Ovary (tissue), 10 donors: ENCODE measurements at regions of chr13 and their contacts with region 1.

Region 1: DNA sequence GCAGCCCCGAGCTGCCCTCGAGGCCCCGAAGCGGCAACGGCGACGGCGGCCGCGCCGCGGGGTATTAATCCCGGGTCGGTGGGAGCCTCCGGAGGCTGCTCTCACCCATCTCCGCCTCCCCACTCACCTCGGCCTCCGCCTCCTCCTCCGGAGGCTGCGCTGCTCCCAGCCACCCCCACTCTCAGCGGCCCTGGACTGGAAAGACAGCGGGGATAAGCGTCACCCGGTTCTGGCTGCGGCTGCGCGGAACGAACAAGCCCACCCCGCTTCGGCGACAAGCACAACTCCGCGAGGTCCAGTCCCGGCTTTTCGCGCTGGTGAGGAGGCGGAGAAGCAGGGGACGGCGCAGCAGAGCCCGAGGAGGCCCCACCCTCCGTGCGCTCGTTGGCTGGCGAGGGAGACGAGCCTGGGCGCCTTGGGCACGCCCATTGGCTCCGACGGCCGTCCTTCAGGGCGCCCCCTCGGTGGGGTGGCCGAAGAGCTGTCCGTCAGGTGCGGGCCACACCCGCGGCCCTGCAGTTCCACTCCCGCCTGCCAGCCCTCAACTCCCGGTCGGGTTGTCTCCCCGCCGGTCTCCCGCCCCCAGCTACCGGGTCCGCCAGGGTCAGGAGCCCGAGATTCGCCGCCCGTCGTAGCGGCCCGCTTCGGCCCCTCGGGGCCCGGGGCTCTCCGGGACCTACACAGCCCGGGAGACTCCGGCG is at the start of gene ZMYM5:
- DNase-seq: peak; percentile 98 to 99 (median 98)
- H3K4me3 ChIP-seq: peak within 1 kb of the TSS; percentile 96
- H3K27ac ChIP-seq: peak within 1 kb of the TSS; percentile 99
- H3K4me1 ChIP-seq: peaks cover 5% of the 10 kb centered on the region
- H3K27me3 ChIP-seq: no peaks in the 10 kb centered on the region
- CTCF ChIP-seq: peak in 2 of 3 donors; percentile 16 to 37
- EP300 ChIP-seq: no peak
- POLR2A ChIP-seq: peak; percentile 80
- total RNA-seq, gene ZMYM5: 13.3 to 19.4 (median 15.9) TPM

Region 2: DNA sequence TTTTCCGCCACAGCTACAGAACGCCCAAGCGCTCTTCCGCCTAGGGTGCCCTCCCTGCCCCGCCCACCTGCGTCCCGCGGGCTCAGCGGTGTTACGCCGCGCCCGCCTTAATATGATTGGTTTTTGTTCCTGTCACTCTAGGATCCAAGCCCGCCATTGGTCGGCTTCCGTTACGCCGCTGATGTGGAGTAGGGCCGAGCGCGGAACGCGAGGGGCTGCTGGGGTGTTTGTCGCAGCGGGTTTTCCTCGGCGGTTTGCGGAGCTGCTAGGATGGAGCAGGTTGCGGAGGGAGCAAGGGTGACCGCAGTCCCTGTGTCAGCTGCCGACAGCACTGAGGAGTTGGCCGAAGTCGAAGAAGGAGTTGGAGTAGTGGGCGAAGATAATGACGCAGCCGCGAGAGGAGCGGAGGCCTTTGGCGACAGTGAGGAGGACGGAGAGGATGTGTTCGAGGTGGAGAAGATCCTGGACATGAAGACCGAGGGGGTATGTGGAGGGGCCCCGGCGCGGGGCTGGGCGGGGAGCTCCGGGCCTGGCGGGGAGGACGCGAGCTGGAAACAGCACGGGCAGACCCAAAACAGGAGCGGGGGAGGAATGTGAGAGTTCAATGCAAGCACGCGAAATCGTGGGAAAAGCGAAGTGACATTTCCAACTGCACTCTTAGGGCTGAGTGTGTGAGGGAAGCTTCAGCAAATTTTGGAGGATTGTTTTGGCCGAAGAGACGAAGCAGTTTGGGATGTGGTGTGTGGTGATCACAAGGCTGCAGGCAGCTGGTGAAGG is 229.8 kb before region 1 on chr13 and contains the start of gene MPHOSPH8:
- intact Hi-C with region 1: loop called in 2 of 4 experiments (anchors 1 to 5 kb)
- DNase-seq: peak; percentile 94 to 95 (median 95)
- H3K4me3 ChIP-seq: peak within 1 kb of the TSS; percentile 92
- H3K27ac ChIP-seq: peak within 1 kb of the TSS; percentile 90 to 95
- H3K4me1 ChIP-seq: peaks cover 7% of the 10 kb centered on the region
- H3K27me3 ChIP-seq: no peaks in the 10 kb centered on the region
- CTCF ChIP-seq: no peak
- EP300 ChIP-seq: no peak
- POLR2A ChIP-seq: peak; percentile 82
- total RNA-seq, gene MPHOSPH8: 32.9 to 47.2 (median 38.3) TPM

Region 3: DNA sequence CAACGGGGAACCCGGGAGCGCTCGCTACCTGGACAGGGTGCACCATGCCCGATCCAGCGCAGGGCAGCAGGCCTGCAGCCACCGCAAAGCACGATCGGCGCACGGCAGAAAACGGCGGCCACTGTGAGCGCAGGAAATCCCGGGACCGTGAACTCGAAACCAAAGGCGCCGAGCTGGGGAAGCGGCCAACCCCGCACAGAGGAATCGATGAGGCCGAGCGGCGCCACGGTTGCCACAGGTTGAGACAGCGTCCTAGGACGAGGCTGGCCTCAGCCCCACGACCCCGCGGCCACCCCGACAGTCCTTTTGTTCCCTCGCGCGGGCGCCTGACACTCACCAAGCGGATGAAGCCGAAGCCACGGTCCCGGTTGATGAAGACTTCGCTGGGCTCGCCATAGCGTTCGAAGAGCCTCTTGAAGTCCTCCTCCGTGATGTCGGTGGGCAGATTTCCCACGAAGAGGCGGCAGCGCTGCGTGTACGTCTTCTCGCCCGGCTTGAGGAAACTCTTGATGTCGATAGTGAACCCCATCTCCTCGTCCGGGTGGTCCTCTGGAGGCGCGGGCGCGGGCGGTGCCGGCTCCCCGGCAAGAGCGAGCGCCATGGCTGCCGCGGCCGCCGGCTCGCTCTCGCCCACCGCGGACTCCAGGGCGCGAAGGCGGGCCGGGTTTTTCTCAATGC is 81.3 kb before region 1 on chr13:
- intact Hi-C with region 1: loop called in 3 of 4 experiments (anchors 5 to 10 kb)
- DNase-seq: peak; percentile 29 to 71 (median 49)
- H3K4me3 ChIP-seq: peak overlapping the region; percentile 92
- H3K27ac ChIP-seq: peak overlapping the region; percentile 74 to 86
- H3K4me1 ChIP-seq: peaks cover 3% of the 10 kb centered on the region
- H3K27me3 ChIP-seq: no peaks in the 10 kb centered on the region
- CTCF ChIP-seq: no peak
- EP300 ChIP-seq: no peak
- POLR2A ChIP-seq: no peak

Region 4: GRCh38 chr13:19959831-19960652 is 96.6 kb after region 1 on chr13:
- intact Hi-C with region 1: loop called in 3 of 4 experiments (anchors 2 to 10 kb)
- DNase-seq: peak; percentile 79 to 85 (median 81)
- H3K4me3 ChIP-seq: peak overlapping the region; percentile 81
- H3K27ac ChIP-seq: peak overlapping the region; percentile 99
- H3K4me1 ChIP-seq: peaks cover 9% of the 10 kb centered on the region
- H3K27me3 ChIP-seq: no peaks in the 10 kb centered on the region
- CTCF ChIP-seq: peak; percentile 86 to 95 (median 92)
- EP300 ChIP-seq: no peak
- POLR2A ChIP-seq: peak; percentile 14

Region 5: GRCh38 chr13:20773194-20774080 is 910.0 kb after region 1 on chr13 and contains the start of gene EEF1AKMT1:
- intact Hi-C with region 1: loop called in 1 of 4 experiments (anchors 10 kb)
- DNase-seq: peak; percentile 95 to 97 (median 97)
- H3K4me3 ChIP-seq: peak within 1 kb of the TSS; percentile 56
- H3K27ac ChIP-seq: peak within 1 kb of the TSS; percentile 6 to 82
- H3K4me1 ChIP-seq: peaks cover 3% of the 10 kb centered on the region
- H3K27me3 ChIP-seq: no peaks in the 10 kb centered on the region
- CTCF ChIP-seq: no peak
- EP300 ChIP-seq: no peak
- POLR2A ChIP-seq: peak; percentile 90
- total RNA-seq, gene EEF1AKMT1: 11.1 to 16.4 (median 12.8) TPM

Region 6: GRCh38 chr13:20796791-20797508 is 933.5 kb after region 1 on chr13:
- intact Hi-C with region 1: no loop called
- DNase-seq: no peak
- H3K4me3 ChIP-seq: no peak overlapping the region
- H3K27ac ChIP-seq: no peak overlapping the region
- H3K4me1 ChIP-seq: no peaks in the 10 kb centered on the region
- H3K27me3 ChIP-seq: no peaks in the 10 kb centered on the region
- CTCF ChIP-seq: no peak
- EP300 ChIP-seq: no peak
- POLR2A ChIP-seq: no peak